Sigmoid colon (tissue), 7 donors: ENCODE measurements at regions of chr2 and their contacts with region 1.

Region 1: DNA sequence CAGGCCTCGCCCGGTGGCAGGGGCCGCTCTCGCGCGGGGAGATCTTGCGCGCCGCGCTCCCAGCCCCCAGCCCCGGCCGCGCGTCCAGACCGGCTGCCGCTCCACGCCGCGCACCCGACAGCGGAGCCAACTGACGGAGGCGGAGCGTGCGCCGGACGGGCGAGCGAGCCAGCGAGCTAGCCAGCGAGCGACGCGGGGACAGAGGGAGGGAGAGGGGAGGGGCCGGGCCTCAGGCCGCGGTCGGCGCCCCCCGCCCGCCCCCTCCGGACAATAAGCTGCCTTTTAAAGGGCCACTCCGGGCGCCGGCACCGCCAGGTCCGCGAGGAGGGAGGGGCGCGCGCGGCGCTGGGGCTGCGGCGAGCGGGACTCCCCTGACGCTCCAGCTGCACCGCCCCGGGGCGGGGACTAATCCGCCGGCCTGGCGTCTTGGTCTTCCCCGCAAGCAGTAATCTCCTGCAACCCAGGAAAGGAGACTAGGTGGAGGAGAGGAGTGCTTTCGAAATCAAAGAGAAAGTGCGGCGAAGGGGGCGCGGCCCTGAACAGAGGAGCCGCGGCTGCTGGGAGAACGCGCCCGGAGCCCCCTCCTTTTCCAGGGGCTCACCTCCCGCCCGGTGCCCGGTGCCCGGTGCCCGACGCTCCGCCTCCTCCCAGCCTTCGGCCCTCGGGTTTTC is at the start of gene BIN1:
- DNase-seq: peak; percentile 92
- H3K4me3 ChIP-seq: peak within 1 kb of the TSS; percentile 73 to 92 (median 82)
- H3K27ac ChIP-seq: peak within 1 kb of the TSS; percentile 87 to 91 (median 89)
- H3K4me1 ChIP-seq: peaks cover 0 to 38% (median 25%) of the 10 kb centered on the region in 4 donors
- H3K27me3 ChIP-seq: no peaks in the 10 kb centered on the region
- CTCF ChIP-seq: no peak
- EP300 ChIP-seq: no peak
- POLR2A ChIP-seq: peak in 1 of 2 donors; percentile 33
- total RNA-seq, gene BIN1: 36.1 to 57.9 (median 43.2) TPM

Region 2: DNA sequence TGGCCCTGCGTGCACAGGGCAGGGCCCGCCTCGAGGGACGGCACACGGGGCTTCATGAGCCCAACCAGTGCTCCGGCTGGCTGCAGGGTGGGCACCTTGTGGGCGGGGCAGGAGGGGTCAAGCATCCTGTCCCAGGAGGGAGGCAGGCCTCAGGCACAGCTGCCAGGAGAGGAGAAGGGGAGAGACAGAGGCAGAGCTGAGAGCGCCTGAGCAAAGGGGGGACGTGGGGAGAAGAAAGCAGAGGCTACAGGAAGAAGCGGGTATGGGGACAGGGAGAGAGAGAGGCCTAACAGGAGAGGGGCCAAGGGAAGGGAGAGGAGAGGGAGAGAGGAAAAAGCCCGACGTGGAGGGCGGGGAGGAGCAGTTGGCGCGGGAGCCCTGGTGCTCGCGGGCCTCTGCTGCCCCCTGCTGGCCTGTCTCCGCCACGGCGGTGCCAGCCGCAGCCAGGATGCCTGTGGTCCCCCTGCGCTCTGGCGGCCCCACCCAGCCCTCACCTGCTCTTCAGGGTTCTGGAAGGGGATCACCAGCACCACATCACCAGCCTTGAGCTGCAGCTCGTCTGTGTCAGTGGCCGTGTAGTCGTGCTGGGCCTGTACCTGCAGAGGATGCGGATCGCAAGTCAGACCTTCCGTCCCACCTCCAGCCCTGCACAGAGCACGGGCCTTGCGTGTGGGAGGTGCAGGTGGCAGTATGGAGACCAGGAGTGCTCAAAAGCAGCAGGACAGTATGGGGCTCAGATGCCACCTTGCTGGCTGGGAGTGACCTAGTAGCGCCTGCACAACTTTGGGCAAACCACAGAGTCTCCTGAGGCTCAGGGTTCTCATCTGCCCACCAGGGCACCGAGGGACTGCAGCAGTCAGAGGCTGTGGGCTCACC is 56.9 kb before region 1 on chr2:
- intact Hi-C with region 1: no loop called
- DNase-seq: peak; percentile 78
- H3K4me3 ChIP-seq: no peak overlapping the region
- H3K27ac ChIP-seq: no peak overlapping the region
- H3K4me1 ChIP-seq: peaks cover 0 to 7% (median 2%) of the 10 kb centered on the region in 4 donors
- H3K27me3 ChIP-seq: no peaks in the 10 kb centered on the region
- CTCF ChIP-seq: peak; percentile 75 to 99 (median 86)
- EP300 ChIP-seq: no peak
- POLR2A ChIP-seq: no peak

Region 3: DNA sequence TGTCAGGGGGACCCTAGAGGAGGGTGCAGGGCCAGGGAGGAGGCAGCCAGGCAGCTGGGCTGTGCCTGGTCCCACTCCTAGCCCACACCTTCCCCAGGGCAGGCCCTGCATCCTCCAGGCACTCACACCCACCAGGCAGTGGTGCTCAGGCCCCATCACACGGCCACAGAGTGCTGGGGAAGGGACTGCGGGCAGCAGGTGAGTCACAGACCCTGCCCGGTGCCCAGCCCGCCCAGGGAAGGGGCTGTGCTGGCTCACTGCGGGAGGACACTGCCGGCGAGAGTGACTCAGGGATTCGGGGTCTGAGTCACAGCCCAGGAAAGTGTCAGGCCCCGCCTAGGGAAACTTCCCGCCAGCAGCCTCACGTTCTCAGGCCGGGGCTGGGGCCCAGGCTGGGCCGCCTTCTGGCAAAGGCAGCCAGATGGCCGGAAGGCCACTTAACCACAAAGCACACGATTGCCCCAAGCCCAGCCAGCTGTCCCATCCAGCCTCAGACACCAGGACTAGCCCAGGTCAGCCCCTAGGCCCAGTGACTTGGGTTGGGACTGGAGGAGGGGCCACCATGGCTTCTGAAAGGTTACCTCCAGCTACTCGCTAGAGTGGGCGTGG is 42.3 kb before region 1 on chr2:
- intact Hi-C with region 1: loop called (anchors 5 kb)
- DNase-seq: peak; percentile 97
- H3K4me3 ChIP-seq: peak overlapping the region in 1 of 4 donors; percentile 4
- H3K27ac ChIP-seq: peak overlapping the region; percentile 67 to 77 (median 75)
- H3K4me1 ChIP-seq: peaks cover 0 to 29% (median 22%) of the 10 kb centered on the region in 4 donors
- H3K27me3 ChIP-seq: no peaks in the 10 kb centered on the region
- CTCF ChIP-seq: no peak
- EP300 ChIP-seq: peak in 2 of 4 donors; percentile 25 to 87
- POLR2A ChIP-seq: no peak

Region 4: DNA sequence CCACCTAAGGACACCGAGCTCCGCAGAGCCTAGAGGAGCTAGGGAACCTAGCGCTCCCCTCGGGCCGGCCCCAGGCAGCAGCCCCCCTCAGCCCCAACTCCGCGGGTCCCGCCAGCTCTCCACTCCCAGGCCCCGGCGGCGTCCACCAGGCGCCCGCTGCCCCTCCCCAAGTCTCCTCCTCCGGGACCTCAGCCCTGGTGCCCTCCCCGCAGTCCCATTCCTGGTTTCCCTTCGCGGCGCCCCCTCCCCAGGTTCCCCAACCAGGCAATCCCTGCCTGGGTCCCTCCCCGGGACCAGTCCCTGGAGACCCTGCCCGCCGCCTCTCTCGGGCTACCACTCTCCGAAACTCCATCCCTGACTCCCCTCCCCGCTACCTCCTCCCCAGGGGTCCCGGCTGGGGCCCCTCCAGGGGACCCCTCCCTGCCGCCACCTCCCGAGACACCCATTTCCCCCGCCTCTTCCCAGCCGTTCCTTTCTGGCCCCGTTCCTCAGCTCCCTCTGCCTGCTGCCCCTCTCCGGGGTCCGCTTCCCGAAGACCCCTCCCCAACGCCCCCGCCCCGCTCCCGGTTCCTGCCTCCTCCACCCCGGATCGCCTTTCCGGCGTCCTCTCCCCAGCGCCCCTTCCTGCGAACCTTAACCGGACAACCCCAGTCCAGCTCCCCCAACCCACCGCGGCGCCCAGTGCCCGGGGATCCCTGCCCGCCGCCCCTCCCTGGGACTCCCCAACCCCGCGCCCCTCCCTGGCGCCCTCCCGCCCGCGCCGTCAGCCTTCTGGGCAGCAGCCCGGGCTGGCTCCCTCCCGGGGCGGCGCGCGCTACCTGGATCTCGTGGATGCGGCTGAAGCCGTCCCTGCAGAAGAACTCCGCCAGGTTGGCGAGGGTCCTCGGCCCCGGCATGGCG is 112.3 kb after region 1 on chr2:
- intact Hi-C with region 1: loop called (anchors 5 kb)
- DNase-seq: peak; percentile 68
- H3K4me3 ChIP-seq: peak overlapping the region; percentile 47 to 60 (median 53)
- H3K27ac ChIP-seq: peak overlapping the region in 3 of 4 donors; percentile 10 to 32 (median 30)
- H3K4me1 ChIP-seq: peaks cover 0 to 24% (median 19%) of the 10 kb centered on the region in 4 donors
- H3K27me3 ChIP-seq: peaks cover 8 to 55% (median 24%) of the 10 kb centered on the region in 3 donors
- CTCF ChIP-seq: no peak
- EP300 ChIP-seq: no peak
- POLR2A ChIP-seq: no peak

Region 5: DNA sequence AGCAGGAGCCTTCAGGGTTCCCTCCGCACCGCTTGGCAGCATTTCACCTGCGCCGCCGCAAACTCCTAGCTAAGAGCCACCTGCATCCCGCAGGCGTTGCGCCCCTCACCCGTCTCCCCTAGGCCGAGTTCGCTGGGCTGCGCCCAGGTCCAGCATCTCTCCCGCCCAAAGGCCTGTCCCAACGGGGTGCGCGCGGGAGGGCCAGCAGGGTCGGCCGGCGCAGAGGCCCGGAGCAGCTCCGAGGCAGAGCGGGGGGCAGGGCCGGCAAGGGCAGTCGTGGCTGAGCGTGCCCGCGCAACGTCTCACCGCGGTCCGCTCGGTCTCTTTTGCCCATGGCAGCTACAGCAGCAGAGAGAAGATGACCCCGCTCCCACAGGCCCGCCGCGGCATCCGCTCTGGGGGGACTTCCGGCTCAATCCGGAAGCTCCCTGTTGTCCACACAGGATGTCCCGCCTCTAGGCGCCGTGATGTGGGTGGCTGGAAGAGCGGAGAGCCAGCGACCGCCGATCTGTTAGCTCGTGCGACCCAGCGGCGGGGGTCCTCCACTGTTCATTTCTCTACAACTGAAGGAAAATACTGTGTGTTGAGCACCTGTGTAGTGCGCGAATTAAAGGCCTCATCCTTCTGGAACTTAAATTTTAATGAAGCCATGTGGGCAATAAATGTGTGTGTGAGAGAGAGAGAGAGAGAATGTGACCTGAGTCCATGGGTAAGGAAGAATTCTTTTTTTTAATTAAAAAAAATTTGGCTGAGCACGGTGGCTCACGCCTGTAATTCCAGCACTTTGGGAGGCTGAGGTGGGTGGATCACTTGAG is 186.9 kb after region 1 on chr2 and contains the start of gene ERCC3:
- intact Hi-C with region 1: loop called (anchors 2 kb)
- DNase-seq: peak; percentile 90
- H3K4me3 ChIP-seq: peak within 1 kb of the TSS; percentile 72 to 97 (median 90)
- H3K27ac ChIP-seq: peak within 1 kb of the TSS; percentile 74 to 86 (median 82)
- H3K4me1 ChIP-seq: peaks cover 0 to 19% (median 13%) of the 10 kb centered on the region in 4 donors
- H3K27me3 ChIP-seq: no peaks in the 10 kb centered on the region
- CTCF ChIP-seq: no peak
- EP300 ChIP-seq: no peak
- POLR2A ChIP-seq: peak; percentile 22 to 34
- total RNA-seq, gene ERCC3: 31.7 to 44.8 (median 39.1) TPM